Activated naive CD4-positive, alpha-beta T cell treated with anti-CD3 and anti-CD28 coated beads for 36 hours (primary cell): ENCODE measurements at regions of chr3 and their contacts with region 1.

Region 1: GRCh38 chr3:44235604-44236484 is 5.8 kb upstream of the TOPAZ1 start:
- DNase-seq: peak; percentile 68
- H3K4me3 Mint-ChIP-seq: no peak overlapping the region
- H3K27ac Mint-ChIP-seq: no peak overlapping the region
- H3K4me1 Mint-ChIP-seq: peaks cover 9% of the 10 kb centered on the region
- H3K27me3 Mint-ChIP-seq: peaks cover 8% of the 10 kb centered on the region

Region 2: GRCh38 chr3:43549626-43550290 is 686.1 kb before region 1 on chr3:
- CTCF ChIA-PET with region 1: no interaction called
- intact Hi-C with region 1: loop called (anchors 5 kb)
- DNase-seq: no peak
- H3K4me3 Mint-ChIP-seq: no peak overlapping the region
- H3K27ac Mint-ChIP-seq: no peak overlapping the region
- H3K4me1 Mint-ChIP-seq: no peaks in the 10 kb centered on the region
- H3K27me3 Mint-ChIP-seq: no peaks in the 10 kb centered on the region

Region 3: DNA sequence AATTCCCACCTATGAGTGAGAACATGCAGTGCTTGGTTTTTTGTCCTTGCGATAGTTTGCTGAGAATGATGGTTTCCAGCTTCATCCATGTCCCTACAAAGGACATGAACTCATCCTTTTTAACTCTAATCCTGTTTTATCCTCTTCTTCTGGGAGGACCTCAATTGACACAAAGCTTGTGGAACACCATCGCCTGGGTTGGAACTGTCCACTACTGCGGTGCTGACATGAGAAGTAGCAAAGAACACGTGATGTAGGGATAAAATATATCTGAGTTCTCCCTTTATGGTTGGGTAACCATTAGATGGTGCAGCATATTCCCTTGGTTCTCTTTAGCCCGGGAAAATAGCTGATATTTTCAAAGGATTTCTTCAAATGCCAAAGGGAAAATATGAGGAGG is 99.4 kb before region 1 on chr3:
- CTCF ChIA-PET with region 1: no interaction called
- intact Hi-C with region 1: no loop called
- DNase-seq: peak; percentile 7
- H3K4me3 Mint-ChIP-seq: no peak overlapping the region
- H3K27ac Mint-ChIP-seq: no peak overlapping the region
- H3K4me1 Mint-ChIP-seq: no peaks in the 10 kb centered on the region
- H3K27me3 Mint-ChIP-seq: peaks cover 10% of the 10 kb centered on the region

Region 4: GRCh38 chr3:44495636-44496415 is 260.0 kb after region 1 on chr3:
- CTCF ChIA-PET with region 1: no interaction called
- intact Hi-C with region 1: no loop called
- DNase-seq: no peak
- H3K4me3 Mint-ChIP-seq: no peak overlapping the region
- H3K27ac Mint-ChIP-seq: no peak overlapping the region
- H3K4me1 Mint-ChIP-seq: no peaks in the 10 kb centered on the region
- H3K27me3 Mint-ChIP-seq: no peaks in the 10 kb centered on the region